GM10248 (cell line): ENCODE measurements at regions of chr7 and their contacts with region 1.

Region 1: DNA sequence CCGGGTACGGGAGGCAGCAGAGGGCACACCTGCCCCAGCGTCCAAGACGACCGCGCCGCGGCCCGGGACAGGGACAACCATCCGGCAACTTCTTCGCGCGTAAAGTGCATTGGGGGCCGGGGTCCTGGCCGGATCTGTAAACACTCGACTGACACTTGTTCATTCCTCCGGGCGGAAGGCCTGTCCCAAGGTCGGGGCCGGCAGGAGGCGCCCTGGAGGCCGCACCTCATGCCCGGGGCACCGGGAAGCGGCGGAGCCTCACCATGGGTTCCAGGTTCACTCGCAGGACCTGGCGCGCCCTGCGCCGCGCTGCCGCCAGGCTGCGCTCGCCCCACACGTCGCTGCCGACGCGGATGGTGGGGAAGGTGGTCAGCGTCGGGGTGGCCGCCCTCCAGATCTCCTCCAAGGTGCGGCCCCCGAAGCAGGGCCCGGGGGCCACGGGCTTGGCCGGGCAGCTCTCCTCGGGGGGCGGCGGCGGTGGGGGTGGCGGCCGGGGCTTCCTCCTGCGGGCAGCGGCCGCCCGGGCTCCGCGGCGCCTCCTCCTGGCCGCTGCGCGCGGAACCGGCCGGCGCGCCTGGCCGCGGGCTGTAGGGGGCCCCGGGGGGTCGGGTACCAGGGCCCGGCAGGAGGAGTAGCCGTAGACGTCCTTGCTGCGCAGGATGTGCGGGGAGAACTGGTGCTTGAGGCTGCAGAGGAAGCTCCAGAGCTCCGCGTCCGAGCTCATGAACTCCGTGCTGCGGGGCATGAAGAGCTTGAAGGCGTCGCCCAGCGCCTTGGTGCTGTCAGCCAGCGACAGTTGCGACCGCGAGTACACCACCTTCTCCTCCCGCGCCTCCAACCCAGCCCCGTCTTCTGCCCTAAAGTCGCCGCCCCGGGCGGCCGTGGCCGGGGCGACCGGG is 746 bp downstream of the CCDC71L start:
- DNase-seq: peak; percentile 88
- CTCF ChIP-seq: peak; percentile 86

Region 2: GRCh38 chr7:106163257-106163656 is 497.0 kb before region 1 on chr7:
- CTCF ChIA-PET with region 1: no interaction called
- POLR2A ChIA-PET with region 1: no interaction called
- DNase-seq: no peak
- CTCF ChIP-seq: no peak

Region 3: DNA sequence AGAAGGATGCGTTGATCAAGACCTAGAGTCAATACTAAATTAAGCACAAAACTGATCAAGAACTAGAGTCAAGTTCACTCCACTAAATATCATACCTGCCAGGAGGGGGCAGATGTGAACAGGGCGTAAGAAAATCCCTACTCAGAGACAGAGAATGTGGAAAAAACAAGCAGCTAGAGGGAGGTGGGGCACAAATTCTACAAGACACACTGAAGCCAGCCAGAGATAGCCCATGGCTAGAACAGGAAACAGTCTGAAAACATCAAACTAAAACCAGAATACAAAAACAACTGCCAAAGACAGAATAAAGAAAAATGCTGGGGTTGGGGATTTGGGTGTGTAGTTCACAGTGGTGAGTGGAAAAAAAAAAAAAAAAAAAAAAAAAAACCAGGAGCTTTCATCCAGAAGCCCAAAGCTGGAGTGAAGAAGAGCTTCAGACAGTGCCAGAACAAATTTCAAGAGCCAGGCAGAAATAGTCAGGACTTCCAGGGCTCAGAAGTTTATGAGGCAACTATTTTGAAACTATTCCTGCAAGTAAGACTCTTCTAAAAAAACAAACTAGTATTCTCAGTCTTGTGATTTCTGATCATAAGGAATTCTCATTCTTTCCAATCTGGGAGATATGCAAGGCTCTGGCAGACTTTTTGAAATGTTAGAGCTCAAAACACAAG is 117.5 kb before region 1 on chr7:
- CTCF ChIA-PET with region 1: interaction called, 25 read pairs
- POLR2A ChIA-PET with region 1: no interaction called
- DNase-seq: peak; percentile 64
- CTCF ChIP-seq: peak; percentile 41

Region 4: DNA sequence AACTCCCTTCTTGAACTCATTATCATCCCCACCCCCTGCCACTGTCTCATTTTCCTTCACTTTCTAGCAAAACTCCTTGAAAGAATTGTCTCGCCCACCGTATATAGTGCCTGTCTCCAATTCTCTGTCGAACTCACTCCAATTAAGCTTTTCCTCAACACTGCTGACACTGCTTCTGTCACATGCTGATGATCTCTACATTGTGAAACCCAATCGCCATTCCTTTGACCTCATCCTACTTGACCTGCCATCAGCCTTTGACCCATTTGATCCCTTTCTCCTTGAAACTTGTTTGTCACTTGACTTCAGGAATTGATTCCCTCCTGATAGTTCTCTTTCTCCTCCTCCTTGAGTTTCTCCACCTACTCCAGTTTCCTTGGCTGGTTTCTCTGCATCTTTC is 54.1 kb before region 1 on chr7:
- CTCF ChIA-PET with region 1: no interaction called
- POLR2A ChIA-PET with region 1: no interaction called
- DNase-seq: no peak
- CTCF ChIP-seq: no peak

Region 5: DNA sequence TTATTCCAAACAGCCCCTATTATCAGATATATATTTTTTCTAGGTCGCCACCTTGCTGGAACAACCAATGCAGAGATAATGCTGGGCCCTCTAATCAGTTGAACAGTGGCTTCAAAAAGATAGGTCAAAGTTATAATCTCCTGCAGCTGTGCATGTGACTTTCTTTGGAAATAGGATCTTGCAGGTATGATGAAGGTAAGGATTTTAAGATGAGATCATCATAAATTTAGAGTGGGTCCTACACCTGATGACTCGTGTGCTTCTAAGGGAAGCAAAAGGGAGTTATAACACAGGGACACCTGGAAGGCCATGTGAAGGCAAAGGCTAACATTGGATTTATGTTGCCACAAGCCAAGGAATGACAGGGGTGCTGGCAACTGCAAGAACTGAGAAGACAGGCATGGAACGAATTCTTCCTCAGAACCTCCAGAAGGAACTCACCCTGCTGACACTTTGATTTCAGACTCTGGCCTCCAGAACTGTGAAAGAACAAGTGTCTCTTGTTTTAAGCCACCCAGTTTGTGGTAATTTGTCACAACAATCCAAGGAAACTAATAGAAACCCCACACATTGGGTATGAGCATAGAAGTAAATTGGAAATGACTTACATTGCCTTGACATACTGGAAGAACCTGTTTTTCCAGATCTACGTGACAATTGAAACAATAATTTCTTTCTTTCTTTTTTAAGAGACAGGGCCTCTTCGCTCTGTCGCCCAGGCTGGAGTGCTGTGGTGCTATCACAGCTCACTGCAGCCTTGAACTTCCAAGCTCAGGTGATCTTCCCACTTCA is 33.6 kb before region 1 on chr7:
- CTCF ChIA-PET with region 1: no interaction called
- POLR2A ChIA-PET with region 1: no interaction called
- DNase-seq: no peak
- CTCF ChIP-seq: no peak

Region 6: GRCh38 chr7:106644999-106645398 is 15.2 kb before region 1 on chr7:
- CTCF ChIA-PET with region 1: interaction called, 25 read pairs
- POLR2A ChIA-PET with region 1: no interaction called
- DNase-seq: no peak
- CTCF ChIP-seq: no peak

Region 7: DNA sequence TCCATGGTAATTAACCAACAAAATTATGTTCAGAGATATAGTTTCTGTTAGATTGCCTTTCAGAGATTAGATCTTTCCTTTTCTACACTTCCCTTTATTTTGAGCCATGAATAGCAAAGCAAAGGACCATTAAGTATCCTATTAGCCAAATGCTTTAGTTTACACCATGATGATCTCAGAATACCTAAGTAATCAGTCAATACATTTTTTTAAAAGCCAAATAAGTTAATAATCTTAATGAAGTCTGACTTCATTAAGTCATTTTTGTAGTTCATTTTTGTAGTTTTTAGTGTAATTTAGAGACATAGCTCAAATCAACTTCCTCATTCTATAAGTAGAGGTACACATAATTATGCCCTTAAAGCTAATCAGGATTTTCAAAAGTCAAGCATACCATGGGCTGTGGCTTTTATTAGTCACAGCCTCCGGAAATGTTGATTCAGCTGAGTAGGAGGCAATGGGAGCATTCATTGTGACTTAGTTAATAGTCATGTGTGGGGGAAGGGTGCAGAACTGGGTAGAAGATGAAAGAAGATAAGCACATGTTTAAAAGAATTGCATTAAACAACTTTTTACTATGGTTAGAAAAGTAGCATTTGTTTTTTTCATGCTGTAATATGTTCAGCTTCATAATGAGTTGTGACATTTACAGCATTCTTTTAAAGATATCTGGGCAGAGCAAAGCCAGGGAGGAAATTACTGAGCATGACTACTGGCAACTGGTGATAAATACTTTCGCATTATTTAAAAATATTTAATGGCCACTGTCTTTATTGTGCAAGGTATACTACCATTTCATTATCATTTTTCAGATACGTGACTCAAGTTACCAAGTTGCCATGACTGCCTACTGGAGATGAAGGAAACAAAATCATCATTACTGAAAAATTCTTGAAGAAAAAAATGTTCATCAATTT is 58.0 kb after region 1 on chr7:
- CTCF ChIA-PET with region 1: interaction called, 22 read pairs
- POLR2A ChIA-PET with region 1: no interaction called
- DNase-seq: peak; percentile 43
- CTCF ChIP-seq: no peak

Region 8: DNA sequence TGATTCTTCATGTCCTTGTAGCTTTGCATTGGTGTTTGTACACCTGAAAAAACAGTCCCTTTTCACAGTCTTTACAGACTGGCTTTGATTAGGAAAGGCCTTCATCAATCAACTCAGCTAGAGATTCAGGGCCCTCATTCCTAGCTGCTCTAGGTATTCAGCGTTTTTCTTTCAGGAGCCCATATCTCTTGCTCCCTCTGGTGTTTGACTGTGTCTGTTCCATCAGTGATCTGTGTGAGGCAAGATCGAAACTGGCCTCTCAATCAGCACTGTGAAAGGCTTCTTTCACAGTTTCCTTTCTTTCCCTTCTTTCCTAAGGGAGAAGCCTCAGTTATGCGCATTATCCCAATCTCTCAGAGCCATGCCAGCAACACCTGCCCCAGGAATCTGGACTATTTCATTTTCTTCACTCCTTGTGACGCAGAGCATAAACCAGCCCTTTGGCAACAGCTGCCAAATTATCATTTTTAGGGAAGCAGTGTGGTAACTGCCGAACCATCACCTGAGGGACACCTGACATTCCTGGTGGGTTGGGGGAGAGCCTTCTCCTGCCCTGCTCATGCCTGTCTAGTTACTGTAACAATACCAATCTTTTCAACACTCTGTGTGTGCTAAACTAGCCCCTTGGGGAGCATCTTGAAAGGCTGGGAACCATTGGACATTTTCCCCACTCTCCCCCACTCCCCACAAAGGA is 76.4 kb after region 1 on chr7:
- CTCF ChIA-PET with region 1: interaction called, 76 read pairs
- POLR2A ChIA-PET with region 1: no interaction called
- DNase-seq: peak; percentile 53
- CTCF ChIP-seq: peak; percentile 59